ENCODE measurements at regions of chr10 and their contacts with region 1.

Region 1: GRCh38 chr10:99430451-99431189 is at the start of gene GOT1:
- DNase-seq: peak; percentile 92 to 97 (median 94)
- ATAC-seq: peak; percentile 93
- H3K4me3 ChIP-seq: peak within 1 kb of the TSS; percentile 95
- H3K27ac ChIP-seq: peak within 1 kb of the TSS; percentile 97
- H3K4me1 ChIP-seq: peaks cover 5 to 16% of the 10 kb centered on the region in 2 experiments; a peak in 3 of 5 replicates
- H3K27me3 ChIP-seq: no peaks in the 10 kb centered on the region
- CTCF ChIP-seq: no peak
- EP300 ChIP-seq: peak; percentile 65
- POLR2A ChIP-seq: peak; percentile 91
- RAD21 ChIP-seq: no peak
- polyA plus RNA-seq, gene GOT1: 116 to 166 TPM

Region 2: GRCh38 chr10:99418910-99419624 is 11.6 kb before region 1 on chr10:
- CTCF ChIA-PET with region 1: no interaction called
- POLR2A ChIA-PET with region 1: interaction called, 23 read pairs
- in situ Hi-C with region 1: no loop called
- intact Hi-C with region 1: no loop called
- DNase-seq: no peak
- ATAC-seq: no peak
- H3K4me3 ChIP-seq: no peak overlapping the region
- H3K27ac ChIP-seq: no peak overlapping the region
- H3K4me1 ChIP-seq: no peaks in the 10 kb centered on the region
- H3K27me3 ChIP-seq: no peaks in the 10 kb centered on the region
- CTCF ChIP-seq: no peak
- EP300 ChIP-seq: no peak
- POLR2A ChIP-seq: no peak
- RAD21 ChIP-seq: no peak

Region 3: GRCh38 chr10:99444383-99445045 is 13.9 kb after region 1 on chr10:
- CTCF ChIA-PET with region 1: no interaction called
- POLR2A ChIA-PET with region 1: interaction called, 12 read pairs
- in situ Hi-C with region 1: no loop called
- intact Hi-C with region 1: no loop called
- DNase-seq: no peak
- ATAC-seq: no peak; the same call in 2 of the 3 replicates
- H3K4me3 ChIP-seq: no peak overlapping the region
- H3K27ac ChIP-seq: no peak overlapping the region
- H3K4me1 ChIP-seq: no peaks in the 10 kb centered on the region
- H3K27me3 ChIP-seq: peaks cover 0 to 7% of the 10 kb centered on the region in 2 experiments; a peak in 2 of 5 replicates
- CTCF ChIP-seq: no peak
- EP300 ChIP-seq: no peak
- POLR2A ChIP-seq: no peak
- RAD21 ChIP-seq: no peak

Region 4: DNA sequence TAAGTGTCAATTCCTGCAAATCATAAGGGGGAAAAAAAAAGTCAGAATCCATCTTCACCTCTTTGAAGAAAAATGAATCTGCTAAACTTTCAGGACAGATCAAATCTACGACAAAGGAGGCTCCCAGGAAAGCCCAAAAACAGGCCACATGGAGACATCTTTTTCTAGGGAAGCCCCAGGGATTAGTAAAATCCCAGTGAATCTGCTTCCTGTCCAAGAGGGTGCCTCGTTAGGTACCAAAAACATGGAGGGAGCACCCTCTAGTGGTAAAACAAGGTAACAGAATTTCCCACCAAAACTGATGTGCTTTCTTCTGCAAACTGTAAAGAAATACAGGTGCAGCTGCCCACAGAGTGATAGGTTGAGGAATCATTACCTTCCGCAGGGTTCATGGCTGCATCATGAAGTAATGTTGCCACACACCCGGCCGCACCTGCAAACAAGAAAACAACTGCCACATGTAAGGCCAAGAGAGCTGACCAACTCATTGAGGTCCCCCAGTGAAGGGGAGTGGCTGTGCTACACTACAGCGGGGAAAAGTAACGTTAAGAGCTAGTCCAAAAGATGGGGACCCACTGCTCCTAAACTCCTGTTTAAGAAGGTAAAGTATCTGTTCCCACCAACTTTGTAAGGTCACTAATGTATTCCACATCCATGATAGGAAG is 181.7 kb after region 1 on chr10:
- CTCF ChIA-PET with region 1: interaction called, 9 read pairs
- POLR2A ChIA-PET with region 1: interaction called, 4 read pairs
- in situ Hi-C with region 1: loop called (anchors 5 kb)
- intact Hi-C with region 1: no loop called
- DNase-seq: peak; percentile 40 to 61 (median 58)
- ATAC-seq: peak; percentile 83
- H3K4me3 ChIP-seq: no peak overlapping the region
- H3K27ac ChIP-seq: no peak overlapping the region
- H3K4me1 ChIP-seq: peaks cover 0 to 4% of the 10 kb centered on the region in 2 experiments; a peak in 3 of 5 replicates
- H3K27me3 ChIP-seq: no peaks in the 10 kb centered on the region
- CTCF ChIP-seq: peak; percentile 68 to 79 (median 70)
- EP300 ChIP-seq: no peak
- POLR2A ChIP-seq: no peak
- RAD21 ChIP-seq: peak; percentile 59 to 71

Region 5: DNA sequence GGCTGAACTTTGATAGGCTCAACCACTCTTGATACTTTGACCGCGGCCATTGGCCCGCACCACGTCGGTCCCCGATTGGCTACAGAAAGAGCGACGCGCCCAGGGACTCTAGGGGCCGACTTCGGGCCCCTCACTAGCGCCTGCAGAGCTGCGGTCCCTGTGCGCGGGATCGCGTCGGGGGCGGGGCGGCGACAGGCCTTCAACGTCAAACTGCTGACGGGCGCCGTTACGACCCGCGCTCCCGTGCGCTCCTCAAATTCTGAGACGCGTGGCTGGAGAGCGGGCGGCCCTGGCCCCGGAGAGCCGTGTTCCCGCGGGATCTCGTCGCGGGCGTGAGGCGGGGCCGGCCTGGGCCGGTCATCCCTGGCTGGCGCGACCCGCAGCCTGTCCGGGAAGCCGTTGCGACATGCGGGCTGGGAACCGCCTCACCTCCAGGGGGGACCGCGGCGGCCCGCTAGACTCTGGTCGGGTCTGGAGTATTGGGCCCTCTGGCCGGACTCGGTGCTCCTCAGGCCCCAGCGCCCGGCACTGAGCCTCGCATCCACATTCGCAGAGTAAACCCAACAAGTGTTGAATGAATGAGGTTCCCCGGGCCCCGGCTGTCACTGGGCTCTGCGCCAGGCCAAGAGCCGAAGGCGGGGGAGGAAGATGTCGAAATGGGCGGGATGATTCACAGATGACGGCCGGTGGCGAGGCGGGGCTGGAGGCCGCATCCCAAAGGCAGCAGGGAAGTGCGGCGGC is 190.3 kb after region 1 on chr10:
- CTCF ChIA-PET with region 1: no interaction called
- POLR2A ChIA-PET with region 1: interaction called, 17 read pairs
- in situ Hi-C with region 1: no loop called
- intact Hi-C with region 1: loop called (anchors 2 kb)
- DNase-seq: peak; percentile 79 to 96 (median 86)
- ATAC-seq: peak; percentile 95
- H3K4me3 ChIP-seq: peak overlapping the region; percentile 80
- H3K27ac ChIP-seq: peak overlapping the region; percentile 99
- H3K4me1 ChIP-seq: peaks cover 12 to 24% of the 10 kb centered on the region in 2 experiments; a peak in 4 of 5 replicates
- H3K27me3 ChIP-seq: no peaks in the 10 kb centered on the region
- CTCF ChIP-seq: no peak
- EP300 ChIP-seq: no peak
- POLR2A ChIP-seq: peak; percentile 86
- RAD21 ChIP-seq: no peak

Region 6: GRCh38 chr10:99711129-99711719 is 280.6 kb after region 1 on chr10:
- CTCF ChIA-PET with region 1: no interaction called
- POLR2A ChIA-PET with region 1: interaction called, 3 read pairs
- in situ Hi-C with region 1: loop called (anchors 25 kb)
- intact Hi-C with region 1: loop called (anchors 10 kb)
- DNase-seq: peak; percentile 29 to 68 (median 38)
- ATAC-seq: peak; percentile 89
- H3K4me3 ChIP-seq: no peak overlapping the region
- H3K27ac ChIP-seq: no peak overlapping the region
- H3K4me1 ChIP-seq: peaks cover 0 to 31% of the 10 kb centered on the region in 2 experiments; a peak in 3 of 5 replicates
- H3K27me3 ChIP-seq: no peaks in the 10 kb centered on the region
- CTCF ChIP-seq: peak; percentile 50 to 74 (median 61)
- EP300 ChIP-seq: no peak
- POLR2A ChIP-seq: no peak
- RAD21 ChIP-seq: peak; percentile 72 to 81

Region 7: DNA sequence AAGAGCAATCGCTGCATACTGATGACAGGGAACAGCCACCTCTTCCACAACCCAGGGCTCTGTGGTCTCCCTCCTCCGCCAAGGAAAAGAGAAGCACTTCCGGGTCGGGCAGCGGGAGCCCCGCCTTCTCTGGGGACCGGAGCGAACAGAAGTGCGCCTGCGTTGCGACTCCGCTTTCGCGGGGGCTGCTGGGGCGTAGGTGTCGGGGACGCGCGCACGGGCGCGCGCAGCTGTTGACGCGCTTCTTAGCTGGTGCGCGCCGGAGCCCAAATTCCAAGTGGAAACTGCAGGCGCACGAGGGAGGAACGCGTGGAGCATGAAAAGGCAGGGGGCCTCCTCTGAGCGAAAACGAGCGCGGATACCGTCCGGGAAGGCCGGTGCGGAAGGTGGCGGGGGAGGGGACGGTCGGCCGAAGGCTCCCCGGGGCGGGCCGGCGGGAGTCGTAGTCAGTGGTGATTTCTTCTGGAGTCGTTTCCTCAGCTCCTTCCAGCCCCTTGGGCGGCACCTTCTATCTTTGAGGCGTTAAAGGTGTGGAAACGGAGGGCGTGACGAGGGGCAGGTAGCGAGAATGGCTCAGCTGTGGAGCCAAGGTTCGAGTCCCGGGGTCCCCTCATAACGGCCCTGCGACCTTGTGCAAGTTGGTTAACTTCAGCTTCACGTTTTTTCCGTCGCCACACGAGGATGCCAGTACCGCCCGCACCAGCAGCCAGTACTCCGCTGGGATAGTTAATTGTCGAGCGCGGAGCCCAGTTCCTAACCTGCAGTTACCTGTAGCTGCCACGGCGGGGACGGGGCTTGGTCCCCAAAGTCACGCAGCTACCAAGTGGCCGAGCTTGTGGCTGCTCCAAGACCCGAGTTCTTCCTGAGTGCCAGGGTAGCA is 301.7 kb after region 1 on chr10 and contains the starts of genes COX15 and CUTC:
- CTCF ChIA-PET with region 1: no interaction called
- POLR2A ChIA-PET with region 1: interaction called, 16 read pairs
- in situ Hi-C with region 1: no loop called
- intact Hi-C with region 1: no loop called
- DNase-seq: peak; percentile 90 to 96 (median 92)
- ATAC-seq: peak; percentile 95
- H3K4me3 ChIP-seq: peak within 1 kb of the TSS; percentile 82
- H3K27ac ChIP-seq: peak within 1 kb of the TSS; percentile 89
- H3K4me1 ChIP-seq: no peaks in the 10 kb centered on the region; a peak in 2 of 5 replicates
- H3K27me3 ChIP-seq: no peaks in the 10 kb centered on the region
- CTCF ChIP-seq: peak; percentile 18 to 36 (median 31); a peak in 4 of 6 replicates
- EP300 ChIP-seq: no peak
- POLR2A ChIP-seq: peak; percentile 90
- RAD21 ChIP-seq: no peak
- polyA plus RNA-seq, gene COX15: 44.4 to 45.1 TPM
- polyA plus RNA-seq, gene CUTC: 47.5 to 69.3 TPM

Measured in K562 (cell line).